Heart right ventricle (tissue), 16 donors: ENCODE measurements at regions of chr10 and their contacts with region 1.

Region 1: DNA sequence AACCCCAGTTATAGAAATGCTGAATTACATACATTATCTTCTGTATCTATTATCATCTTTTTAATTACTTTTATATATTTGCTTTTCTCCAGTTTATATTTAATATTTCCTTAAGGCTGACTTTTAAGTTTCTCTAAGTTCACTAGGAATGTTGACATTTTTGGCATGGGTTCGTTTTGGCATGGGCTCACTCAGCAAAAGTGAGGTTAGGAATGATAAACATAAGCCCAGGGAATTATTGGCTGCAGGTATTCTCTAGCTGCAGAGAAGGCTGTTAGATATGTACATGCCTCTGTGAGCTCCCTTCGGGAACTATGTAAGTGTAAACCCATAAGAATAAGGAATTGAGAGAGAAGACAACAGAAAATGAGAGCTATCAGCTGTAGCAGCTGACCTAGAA is 63.6 kb upstream of the RAB18 start:
- DNase-seq: no peak
- ATAC-seq: no peak
- H3K4me3 ChIP-seq: no peak overlapping the region
- H3K27ac ChIP-seq: no peak overlapping the region
- H3K4me1 ChIP-seq: no peaks in the 10 kb centered on the region
- H3K27me3 ChIP-seq: peaks cover 0 to 9% (median 0%) of the 10 kb centered on the region in 7 donors
- CTCF ChIP-seq: no peak

Region 2: GRCh38 chr10:27661514-27662286 is 221.2 kb after region 1 on chr10:
- intact Hi-C with region 1: loop called in 5 of 10 experiments (anchors 5 kb)
- DNase-seq: no peak
- ATAC-seq: no peak
- H3K4me3 ChIP-seq: no peak overlapping the region
- H3K27ac ChIP-seq: no peak overlapping the region
- H3K4me1 ChIP-seq: peaks cover 0 to 27% (median 0%) of the 10 kb centered on the region in 9 donors
- H3K27me3 ChIP-seq: peaks cover 0 to 10% (median 0%) of the 10 kb centered on the region in 7 donors
- CTCF ChIP-seq: no peak